Heart left ventricle (tissue), 16 donors: ENCODE measurements at regions of chr5 and their contacts with region 1.

Region 1: GRCh38 chr5:67724412-67725135 is 491.0 kb upstream of the PIK3R1 start:
- DNase-seq: no peak
- ATAC-seq: no peak
- H3K4me3 ChIP-seq: no peak overlapping the region
- H3K27ac ChIP-seq: peak overlapping the region in 1 of 12 donors; percentile 63
- H3K4me1 ChIP-seq: no peaks in the 10 kb centered on the region
- H3K27me3 ChIP-seq: no peaks in the 10 kb centered on the region
- CTCF ChIP-seq: no peak
- POLR2A ChIP-seq: no peak

Region 2: DNA sequence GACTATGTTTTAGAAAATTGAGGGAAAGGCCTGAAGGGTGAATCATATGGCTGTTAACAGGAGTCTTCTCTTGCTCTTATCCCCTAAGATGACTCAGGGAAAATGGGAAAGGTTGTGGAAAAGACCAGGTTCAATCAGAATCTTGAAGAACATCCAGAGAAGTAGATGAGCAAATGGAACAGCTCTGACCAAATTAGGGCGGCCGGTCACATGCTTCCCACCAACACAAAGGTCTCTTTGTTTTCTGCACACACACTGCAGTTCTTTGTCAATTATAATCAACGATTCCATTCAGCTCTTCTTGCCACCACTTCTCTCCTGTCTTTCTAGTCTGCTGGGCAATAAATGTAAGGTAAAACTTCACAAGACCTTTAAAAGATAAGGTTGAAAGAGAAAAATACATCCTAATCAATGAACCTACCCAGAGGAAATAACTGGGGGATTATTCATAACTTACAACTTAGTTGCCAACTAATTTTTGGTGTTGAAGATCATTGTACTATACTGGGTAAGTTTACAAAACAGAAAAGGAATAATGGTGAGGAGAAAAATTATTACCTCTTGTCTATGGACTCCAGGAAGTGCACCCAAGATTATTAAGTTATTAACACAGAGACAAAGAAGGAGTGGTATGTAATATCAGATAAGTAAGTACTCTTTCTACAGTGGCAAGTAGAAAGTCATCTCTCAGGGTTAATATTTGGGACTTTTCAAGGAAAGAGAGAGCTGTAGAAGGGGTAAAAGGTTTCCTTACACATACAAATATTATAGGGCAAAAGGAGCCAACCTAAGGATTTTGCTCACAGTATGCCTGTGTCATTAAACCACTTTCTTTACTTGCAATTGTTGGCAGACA is 49.1 kb after region 1 on chr5:
- intact Hi-C with region 1: loop called in 1 of 10 experiments (anchors 10 kb)
- DNase-seq: peak in 3 of 5 donors; percentile 22 to 38 (median 26)
- ATAC-seq: peak; percentile 54 to 89 (median 82)
- H3K4me3 ChIP-seq: no peak overlapping the region
- H3K27ac ChIP-seq: peak overlapping the region in 9 of 12 donors; percentile 13 to 61 (median 40)
- H3K4me1 ChIP-seq: peaks cover 0 to 10% (median 0%) of the 10 kb centered on the region in 12 donors
- H3K27me3 ChIP-seq: no peaks in the 10 kb centered on the region
- CTCF ChIP-seq: no peak
- POLR2A ChIP-seq: no peak